ENCODE measurements at regions of chr15 and their contacts with region 1.

Region 1: GRCh38 chr15:38563723-38564519 is 693 bp downstream of the RASGRP1 start:
- DNase-seq: peak; percentile 80 to 89 (median 83)
- H3K4me3 ChIP-seq: peak overlapping the region; percentile 90
- H3K4me3 Mint-ChIP-seq: peak overlapping the region; percentile 96 to 99 (median 97)
- H3K27ac ChIP-seq: peak overlapping the region; percentile 80
- H3K27ac Mint-ChIP-seq: peak overlapping the region; percentile 82 to 98 (median 90)
- H3K4me1 ChIP-seq: peaks cover 57% of the 10 kb centered on the region
- H3K4me1 Mint-ChIP-seq: peaks cover 60 to 63% (median 62%) of the 10 kb centered on the region in 3 donors
- H3K27me3 ChIP-seq: no peaks in the 10 kb centered on the region
- H3K27me3 Mint-ChIP-seq: no peaks in the 10 kb centered on the region

Region 2: GRCh38 chr15:38440353-38441129 is 123.4 kb before region 1 on chr15:
- CTCF ChIA-PET with region 1: interaction called, 12 read pairs
- POLR2A ChIA-PET with region 1: no interaction called
- DNase-seq: peak in 4 of 5 donors; percentile 28 to 64 (median 54)
- H3K4me3 ChIP-seq: no peak overlapping the region
- H3K4me3 Mint-ChIP-seq: no peak overlapping the region
- H3K27ac ChIP-seq: no peak overlapping the region
- H3K27ac Mint-ChIP-seq: peak overlapping the region in 2 of 8 donors; percentile 12 to 56
- H3K4me1 ChIP-seq: no peaks in the 10 kb centered on the region
- H3K4me1 Mint-ChIP-seq: peaks cover 4 to 6% (median 4%) of the 10 kb centered on the region in 3 donors
- H3K27me3 ChIP-seq: no peaks in the 10 kb centered on the region
- H3K27me3 Mint-ChIP-seq: peaks cover 16 to 37% of the 10 kb centered on the region in 2 donors

Region 3: GRCh38 chr15:38521316-38521715 is 42.6 kb before region 1 on chr15:
- CTCF ChIA-PET with region 1: interaction called, 11 read pairs
- POLR2A ChIA-PET with region 1: no interaction called
- DNase-seq: no peak
- H3K4me3 ChIP-seq: no peak overlapping the region
- H3K4me3 Mint-ChIP-seq: peak overlapping the region in 1 of 7 donors; percentile 27
- H3K27ac ChIP-seq: no peak overlapping the region
- H3K27ac Mint-ChIP-seq: peak overlapping the region in 7 of 8 donors; percentile 28 to 93 (median 62)
- H3K4me1 ChIP-seq: peaks cover 1% of the 10 kb centered on the region
- H3K4me1 Mint-ChIP-seq: peaks cover 45 to 73% (median 63%) of the 10 kb centered on the region in 3 donors
- H3K27me3 ChIP-seq: no peaks in the 10 kb centered on the region
- H3K27me3 Mint-ChIP-seq: no peaks in the 10 kb centered on the region

Region 4: GRCh38 chr15:38587214-38587613 is 23.3 kb after region 1 on chr15:
- CTCF ChIA-PET with region 1: interaction called, 13 read pairs
- POLR2A ChIA-PET with region 1: no interaction called
- DNase-seq: no peak
- H3K4me3 ChIP-seq: peak overlapping the region; percentile 43
- H3K4me3 Mint-ChIP-seq: peak overlapping the region in 5 of 7 donors; percentile 15 to 70 (median 45)
- H3K27ac ChIP-seq: no peak overlapping the region
- H3K27ac Mint-ChIP-seq: peak overlapping the region; percentile 58 to 92 (median 80)
- H3K4me1 ChIP-seq: peaks cover 19% of the 10 kb centered on the region
- H3K4me1 Mint-ChIP-seq: peaks cover 17 to 36% (median 18%) of the 10 kb centered on the region in 3 donors
- H3K27me3 ChIP-seq: no peaks in the 10 kb centered on the region
- H3K27me3 Mint-ChIP-seq: peaks cover 0 to 2% of the 10 kb centered on the region in 2 donors

Region 5: GRCh38 chr15:38631126-38632075 is 67.5 kb after region 1 on chr15:
- CTCF ChIA-PET with region 1: interaction called, 18 read pairs
- POLR2A ChIA-PET with region 1: interaction called, 3 read pairs
- DNase-seq: no peak
- H3K4me3 ChIP-seq: no peak overlapping the region
- H3K4me3 Mint-ChIP-seq: no peak overlapping the region
- H3K27ac ChIP-seq: no peak overlapping the region
- H3K27ac Mint-ChIP-seq: peak overlapping the region in 3 of 8 donors; percentile 32 to 82 (median 62)
- H3K4me1 ChIP-seq: peaks cover 17% of the 10 kb centered on the region
- H3K4me1 Mint-ChIP-seq: peaks cover 11 to 23% (median 13%) of the 10 kb centered on the region in 3 donors
- H3K27me3 ChIP-seq: no peaks in the 10 kb centered on the region
- H3K27me3 Mint-ChIP-seq: peaks cover 0 to 2% of the 10 kb centered on the region in 2 donors

Region 6: GRCh38 chr15:38671675-38672254 is 107.8 kb after region 1 on chr15:
- CTCF ChIA-PET with region 1: interaction called, 85 read pairs
- POLR2A ChIA-PET with region 1: interaction called, 22 read pairs
- DNase-seq: peak; percentile 35 to 69 (median 62)
- H3K4me3 ChIP-seq: peak overlapping the region; percentile 13
- H3K4me3 Mint-ChIP-seq: peak overlapping the region; percentile 6 to 75 (median 68)
- H3K27ac ChIP-seq: peak overlapping the region; percentile 62
- H3K27ac Mint-ChIP-seq: peak overlapping the region; percentile 95 to 100 (median 98)
- H3K4me1 ChIP-seq: peaks cover 75% of the 10 kb centered on the region
- H3K4me1 Mint-ChIP-seq: peaks cover 67 to 85% (median 82%) of the 10 kb centered on the region in 3 donors
- H3K27me3 ChIP-seq: no peaks in the 10 kb centered on the region
- H3K27me3 Mint-ChIP-seq: no peaks in the 10 kb centered on the region

Region 7: DNA sequence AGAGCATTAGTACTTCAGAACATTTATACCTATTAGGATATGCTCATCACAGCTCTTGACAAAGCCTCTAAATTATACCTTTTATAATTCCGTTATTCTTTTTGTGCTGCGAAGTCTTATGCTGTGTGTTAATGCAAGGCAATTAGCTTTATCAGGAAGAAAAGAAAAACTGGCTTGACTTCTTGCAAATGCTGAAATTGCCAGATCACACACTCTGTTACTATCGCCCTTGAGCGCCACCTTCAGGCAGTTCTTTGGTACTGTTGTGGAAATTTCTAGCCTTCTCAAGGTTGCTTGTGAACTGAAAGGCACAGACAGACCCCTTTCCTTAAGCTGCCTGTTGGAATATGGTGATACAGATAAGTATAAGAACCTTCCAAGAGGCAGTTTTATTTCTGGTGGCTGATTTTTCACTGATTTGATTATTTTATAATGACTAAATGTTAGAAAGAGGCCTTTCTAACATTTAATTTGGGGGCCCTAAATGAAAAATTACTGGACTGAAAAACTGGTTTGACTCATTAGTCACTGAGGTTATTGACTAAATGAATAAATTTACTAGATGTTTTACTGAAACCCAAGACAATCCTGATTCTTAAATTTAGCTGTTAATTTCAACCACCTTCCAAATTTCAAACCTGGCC is 126.9 kb after region 1 on chr15:
- CTCF ChIA-PET with region 1: interaction called, 213 read pairs
- POLR2A ChIA-PET with region 1: interaction called, 55 read pairs
- DNase-seq: peak; percentile 68 to 82 (median 72)
- H3K4me3 ChIP-seq: no peak overlapping the region
- H3K4me3 Mint-ChIP-seq: no peak overlapping the region
- H3K27ac ChIP-seq: no peak overlapping the region
- H3K27ac Mint-ChIP-seq: peak overlapping the region in 2 of 8 donors; percentile 57 to 91
- H3K4me1 ChIP-seq: peaks cover 61% of the 10 kb centered on the region
- H3K4me1 Mint-ChIP-seq: peaks cover 70 to 84% (median 72%) of the 10 kb centered on the region in 3 donors
- H3K27me3 ChIP-seq: no peaks in the 10 kb centered on the region
- H3K27me3 Mint-ChIP-seq: no peaks in the 10 kb centered on the region